IMR-90 (cell line): ENCODE measurements at regions of chr22 and their contacts with region 1.

Region 1: GRCh38 chr22:30313527-30314363 is 13.0 kb downstream of the TBC1D10A start:
- DNase-seq: no peak
- ATAC-seq: no peak
- H3K4me3 ChIP-seq: no peak overlapping the region
- H3K27ac ChIP-seq: no peak overlapping the region
- H3K4me1 ChIP-seq: peaks cover 61% of the 10 kb centered on the region
- H3K27me3 ChIP-seq: no peaks in the 10 kb centered on the region
- CTCF ChIP-seq: no peak
- POLR2A ChIP-seq: no peak
- RAD21 ChIP-seq: no peak

Region 2: GRCh38 chr22:29937940-29938693 is 375.6 kb before region 1 on chr22:
- CTCF ChIA-PET with region 1: no interaction called
- POLR2A ChIA-PET with region 1: no interaction called
- dilution Hi-C with region 1: no loop called
- in situ Hi-C with region 1: no loop called
- intact Hi-C with region 1: no loop called
- DNase-seq: peak; percentile 8
- ATAC-seq: no peak
- H3K4me3 ChIP-seq: no peak overlapping the region
- H3K27ac ChIP-seq: no peak overlapping the region
- H3K4me1 ChIP-seq: no peaks in the 10 kb centered on the region; the same call in 1 of the 2 replicates
- H3K27me3 ChIP-seq: no peaks in the 10 kb centered on the region
- CTCF ChIP-seq: no peak
- POLR2A ChIP-seq: no peak
- RAD21 ChIP-seq: no peak

Region 3: DNA sequence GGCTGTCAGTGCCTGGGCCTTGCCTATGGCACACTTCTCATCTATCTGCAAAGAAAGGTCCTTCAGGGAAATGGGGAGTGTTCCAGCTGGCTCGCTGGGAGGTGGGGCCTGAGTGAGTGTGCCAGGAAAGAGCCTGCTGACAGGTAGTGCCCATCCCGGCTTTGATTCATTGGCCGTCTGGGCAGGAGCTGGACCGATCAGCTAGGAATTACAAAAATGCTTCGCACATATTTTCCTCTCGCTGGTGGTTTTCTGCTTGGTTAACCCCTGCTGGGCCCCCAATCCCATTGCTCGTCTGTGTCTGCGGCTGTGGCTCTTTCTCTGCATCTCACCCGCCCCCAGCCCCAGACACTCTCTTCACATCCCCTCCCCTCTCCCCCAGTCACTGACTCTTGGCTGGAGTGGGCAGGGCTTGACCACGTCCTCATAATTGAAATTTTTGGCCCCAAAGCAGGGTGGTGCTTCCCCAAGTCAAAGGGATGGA is 78.0 kb before region 1 on chr22:
- CTCF ChIA-PET with region 1: no interaction called
- POLR2A ChIA-PET with region 1: no interaction called
- dilution Hi-C with region 1: no loop called
- in situ Hi-C with region 1: no loop called
- intact Hi-C with region 1: no loop called
- DNase-seq: peak; percentile 88
- ATAC-seq: peak; percentile 61
- H3K4me3 ChIP-seq: no peak overlapping the region
- H3K27ac ChIP-seq: peak overlapping the region; percentile 91
- H3K4me1 ChIP-seq: peaks cover 35% of the 10 kb centered on the region
- H3K27me3 ChIP-seq: no peaks in the 10 kb centered on the region
- CTCF ChIP-seq: no peak
- POLR2A ChIP-seq: no peak
- RAD21 ChIP-seq: no peak

Region 4: DNA sequence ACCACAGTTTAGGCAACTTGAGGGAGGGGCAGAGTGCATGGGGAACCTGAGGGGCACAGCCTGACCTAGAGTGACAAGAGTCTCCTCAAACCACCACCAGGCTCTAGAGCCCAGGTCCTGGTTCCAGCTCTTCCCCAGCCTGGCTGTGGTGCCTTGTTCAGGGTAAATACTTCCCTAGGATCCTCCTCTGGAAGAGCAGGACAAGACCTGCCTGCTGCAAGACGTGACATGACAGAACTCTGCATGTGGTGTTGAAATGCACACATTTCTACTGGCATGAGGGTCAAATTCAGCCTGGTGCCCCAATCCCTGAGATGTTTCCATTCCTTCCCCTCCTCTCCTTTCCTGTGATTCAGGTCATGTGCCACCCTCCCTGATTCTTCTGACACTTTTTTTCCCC is 86.4 kb after region 1 on chr22:
- CTCF ChIA-PET with region 1: no interaction called
- POLR2A ChIA-PET with region 1: interaction called, 11 read pairs
- dilution Hi-C with region 1: no loop called
- in situ Hi-C with region 1: no loop called
- intact Hi-C with region 1: no loop called
- DNase-seq: no peak
- ATAC-seq: no peak
- H3K4me3 ChIP-seq: no peak overlapping the region
- H3K27ac ChIP-seq: no peak overlapping the region
- H3K4me1 ChIP-seq: peaks cover 14% of the 10 kb centered on the region
- H3K27me3 ChIP-seq: no peaks in the 10 kb centered on the region
- CTCF ChIP-seq: no peak
- POLR2A ChIP-seq: no peak
- RAD21 ChIP-seq: no peak

Region 5: DNA sequence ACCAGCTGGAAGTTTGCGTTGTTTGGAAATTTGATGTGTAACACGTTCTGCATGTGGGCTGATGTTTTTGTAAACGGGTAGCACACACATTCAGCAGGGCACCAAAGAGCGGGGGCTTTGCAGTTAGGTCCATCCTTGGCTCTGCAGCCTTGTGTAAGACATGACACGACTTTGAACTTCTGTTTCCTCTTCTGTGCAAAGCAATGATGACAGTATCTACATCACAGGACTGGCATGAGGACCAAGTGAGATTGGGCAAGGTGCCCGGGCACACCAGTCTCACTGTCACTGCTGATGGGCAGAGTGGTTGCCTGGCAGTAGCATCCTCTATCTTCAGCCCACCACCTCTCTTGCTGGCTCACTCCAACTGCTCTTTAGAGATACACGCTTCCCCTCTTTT is 296.6 kb after region 1 on chr22:
- CTCF ChIA-PET with region 1: no interaction called
- POLR2A ChIA-PET with region 1: no interaction called
- dilution Hi-C with region 1: no loop called
- in situ Hi-C with region 1: no loop called
- intact Hi-C with region 1: no loop called
- DNase-seq: no peak
- ATAC-seq: no peak
- H3K4me3 ChIP-seq: no peak overlapping the region
- H3K27ac ChIP-seq: no peak overlapping the region
- H3K4me1 ChIP-seq: peaks cover 14% of the 10 kb centered on the region
- H3K27me3 ChIP-seq: no peaks in the 10 kb centered on the region
- CTCF ChIP-seq: no peak
- POLR2A ChIP-seq: no peak
- RAD21 ChIP-seq: no peak